ENCODE measurements at regions of chr11 and their contacts with region 1.

Region 1: GRCh38 chr11:126062679-126063506 is at the start of gene CDON:
- DNase-seq: peak; percentile 92
- H3K4me3 ChIP-seq: peak within 1 kb of the TSS; percentile 80 to 82
- H3K27ac ChIP-seq: peak within 1 kb of the TSS; percentile 66 to 79
- H3K4me1 ChIP-seq: no peaks in the 10 kb centered on the region
- H3K27me3 ChIP-seq: no peaks in the 10 kb centered on the region
- CTCF ChIP-seq: peak in 3 of 4 experiments; percentile 25 to 48 (median 47)
- POLR2A ChIP-seq: peak; percentile 41
- total RNA-seq, gene CDON: 9.8 to 26.9 TPM

Region 2: DNA sequence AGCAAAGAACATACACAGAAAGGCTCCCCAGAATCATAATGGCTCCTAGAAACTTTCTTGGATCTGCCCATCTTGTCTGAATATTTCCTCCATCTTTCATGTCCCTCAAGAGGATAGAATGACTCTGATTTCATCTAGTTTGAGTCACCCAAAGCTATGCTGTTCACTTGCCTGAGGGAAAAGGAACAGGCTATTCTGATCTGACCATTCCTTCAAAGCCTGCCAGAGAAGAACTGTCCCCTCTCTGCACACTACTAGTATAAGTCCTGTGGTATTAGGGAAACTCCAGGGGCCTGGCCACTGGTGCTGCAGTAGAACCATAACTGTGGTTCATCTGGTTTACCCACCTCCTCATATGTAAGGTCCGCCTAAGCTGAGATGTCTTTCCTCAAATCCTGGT is 319.2 kb before region 1 on chr11:
- intact Hi-C with region 1: no loop called
- DNase-seq: no peak
- H3K4me3 ChIP-seq: no peak overlapping the region
- H3K27ac ChIP-seq: no peak overlapping the region
- H3K4me1 ChIP-seq: no peaks in the 10 kb centered on the region
- H3K27me3 ChIP-seq: no peaks in the 10 kb centered on the region
- CTCF ChIP-seq: no peak
- POLR2A ChIP-seq: no peak

Region 3: GRCh38 chr11:125923012-125923579 is 139.8 kb before region 1 on chr11:
- intact Hi-C with region 1: loop called (anchors 10 kb)
- DNase-seq: peak; percentile 69
- H3K4me3 ChIP-seq: no peak overlapping the region
- H3K27ac ChIP-seq: no peak overlapping the region
- H3K4me1 ChIP-seq: no peaks in the 10 kb centered on the region
- H3K27me3 ChIP-seq: no peaks in the 10 kb centered on the region
- CTCF ChIP-seq: peak; percentile 58 to 84 (median 72)
- POLR2A ChIP-seq: no peak

Region 4: GRCh38 chr11:125950696-125951651 is 111.9 kb before region 1 on chr11:
- intact Hi-C with region 1: loop called (anchors 5 kb)
- DNase-seq: no peak
- H3K4me3 ChIP-seq: no peak overlapping the region
- H3K27ac ChIP-seq: peak overlapping the region; percentile 48 to 61
- H3K4me1 ChIP-seq: peaks cover 18% of the 10 kb centered on the region
- H3K27me3 ChIP-seq: no peaks in the 10 kb centered on the region
- CTCF ChIP-seq: no peak
- POLR2A ChIP-seq: no peak

Region 5: GRCh38 chr11:126113515-126113957 is 50.6 kb after region 1 on chr11:
- intact Hi-C with region 1: loop called (anchors 5 kb)
- DNase-seq: peak; percentile 93
- H3K4me3 ChIP-seq: no peak overlapping the region
- H3K27ac ChIP-seq: peak overlapping the region; percentile 4 to 59
- H3K4me1 ChIP-seq: peaks cover 21% of the 10 kb centered on the region
- H3K27me3 ChIP-seq: no peaks in the 10 kb centered on the region
- CTCF ChIP-seq: peak in 1 of 4 experiments; percentile 35
- POLR2A ChIP-seq: peak; percentile 36

Measured in prostate gland (tissue), 2 donors.